ENCODE measurements at regions of chr2 and their contacts with region 1.

Region 1: GRCh38 chr2:85888684-85889626 is at the start of gene ST3GAL5:
- DNase-seq: peak; percentile 90 to 96 (median 94)
- ATAC-seq: peak; percentile 83 to 86
- H3K4me3 Mint-ChIP-seq: peak within 1 kb of the TSS; percentile 95 to 100 (median 99)
- H3K27ac Mint-ChIP-seq: peak within 1 kb of the TSS; percentile 97 to 100 (median 99)
- H3K4me1 Mint-ChIP-seq: peaks cover 46 to 79% (median 77%) of the 10 kb centered on the region in 4 donors
- H3K27me3 Mint-ChIP-seq: no peaks in the 10 kb centered on the region
- polyA plus RNA-seq, gene ST3GAL5: 17.1 to 23.8 (median 17.3) TPM

Region 2: DNA sequence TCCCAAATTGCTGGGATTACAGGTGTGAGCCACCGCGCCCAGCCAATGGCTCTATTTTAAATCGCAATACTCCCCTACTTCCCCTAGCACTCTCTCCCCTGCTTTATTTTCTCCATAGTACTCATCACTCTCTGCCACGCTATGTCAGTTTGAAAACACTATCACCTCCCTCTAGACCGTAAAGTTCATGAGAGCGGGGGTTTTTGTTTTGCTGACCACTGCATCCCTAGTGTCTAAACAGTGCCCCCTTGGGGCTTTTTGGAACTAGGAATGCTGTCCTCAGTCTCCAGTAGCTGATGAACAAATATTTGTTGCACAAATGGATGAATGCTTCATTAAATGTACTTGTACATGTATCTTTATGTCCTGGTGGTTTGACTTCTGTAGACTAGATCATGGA is 91.0 kb before region 1 on chr2:
- POLR2A ChIA-PET with region 1: no interaction called
- DNase-seq: no peak
- ATAC-seq: no peak
- H3K4me3 Mint-ChIP-seq: no peak overlapping the region
- H3K27ac Mint-ChIP-seq: no peak overlapping the region
- H3K4me1 Mint-ChIP-seq: no peaks in the 10 kb centered on the region
- H3K27me3 Mint-ChIP-seq: peaks cover 11 to 26% (median 17%) of the 10 kb centered on the region in 5 donors

Region 3: DNA sequence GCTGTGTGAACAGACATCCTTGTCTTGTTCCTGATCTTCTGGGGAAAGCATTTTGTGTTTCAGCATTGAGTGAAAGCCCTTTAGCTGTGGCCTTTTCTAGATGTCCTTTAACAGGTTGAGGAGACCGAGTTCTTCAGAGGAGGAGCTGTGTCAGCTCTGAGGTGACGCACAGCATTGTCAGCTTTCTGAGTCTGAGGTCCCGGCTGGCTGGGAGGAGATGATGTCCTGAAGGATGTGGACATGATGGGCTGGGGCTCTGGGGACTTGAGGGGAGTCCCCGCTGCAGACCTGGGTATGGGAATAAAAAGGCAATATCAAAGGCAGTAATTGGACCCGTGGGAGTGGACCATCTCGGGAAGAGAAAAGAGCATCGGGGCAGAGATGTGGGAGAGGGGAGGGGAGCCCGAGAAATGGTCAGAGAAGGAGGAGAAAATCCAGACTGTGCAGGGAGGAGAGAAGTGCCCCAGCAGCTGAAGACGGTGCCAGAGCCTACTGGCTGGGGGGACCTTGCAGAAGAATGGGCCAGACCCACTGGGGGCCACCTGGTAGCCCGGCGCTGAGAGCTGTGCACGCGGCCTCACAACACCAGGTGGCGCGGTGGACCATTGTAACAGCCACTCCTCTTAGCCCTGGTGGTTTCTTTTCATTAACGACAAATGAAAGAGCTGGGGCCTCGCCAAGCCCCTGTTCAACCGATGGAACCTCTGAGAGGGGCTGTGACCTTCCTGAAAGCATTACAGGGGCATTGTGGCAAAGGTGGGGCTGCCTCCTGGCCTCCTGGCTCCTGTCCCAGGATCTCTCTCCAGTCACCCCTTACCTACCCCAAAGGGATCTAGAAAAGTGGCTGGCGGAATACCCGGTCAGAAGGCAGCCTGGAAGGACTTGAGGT is 61.7 kb before region 1 on chr2:
- POLR2A ChIA-PET with region 1: interaction called, 43 read pairs
- DNase-seq: peak; percentile 72 to 90 (median 81)
- ATAC-seq: peak; percentile 99
- H3K4me3 Mint-ChIP-seq: peak overlapping the region in 8 of 10 donors; percentile 20 to 59 (median 41)
- H3K27ac Mint-ChIP-seq: peak overlapping the region in 9 of 10 donors; percentile 69 to 90 (median 73)
- H3K4me1 Mint-ChIP-seq: peaks cover 8 to 29% (median 26%) of the 10 kb centered on the region in 4 donors
- H3K27me3 Mint-ChIP-seq: peaks cover 0 to 3% (median 0%) of the 10 kb centered on the region in 5 donors

Region 4: GRCh38 chr2:85852937-85853498 is 35.9 kb before region 1 on chr2:
- POLR2A ChIA-PET with region 1: interaction called, 97 read pairs
- DNase-seq: peak in 9 of 10 donors; percentile 40 to 85 (median 68)
- ATAC-seq: peak; percentile 87 to 90
- H3K4me3 Mint-ChIP-seq: peak overlapping the region; percentile 66 to 90 (median 86)
- H3K27ac Mint-ChIP-seq: peak overlapping the region; percentile 97 to 100 (median 100)
- H3K4me1 Mint-ChIP-seq: peaks cover 33 to 85% (median 81%) of the 10 kb centered on the region in 4 donors
- H3K27me3 Mint-ChIP-seq: no peaks in the 10 kb centered on the region

Region 5: GRCh38 chr2:85905187-85905666 is 16.3 kb after region 1 on chr2:
- POLR2A ChIA-PET with region 1: interaction called, 17 read pairs
- DNase-seq: no peak
- ATAC-seq: no peak
- H3K4me3 Mint-ChIP-seq: no peak overlapping the region
- H3K27ac Mint-ChIP-seq: peak overlapping the region in 1 of 10 donors; percentile 54
- H3K4me1 Mint-ChIP-seq: peaks cover 7 to 20% (median 12%) of the 10 kb centered on the region in 4 donors
- H3K27me3 Mint-ChIP-seq: no peaks in the 10 kb centered on the region

Region 6: GRCh38 chr2:86035883-86036668 is 147.1 kb after region 1 on chr2:
- POLR2A ChIA-PET with region 1: interaction called, 106 read pairs
- DNase-seq: peak; percentile 39 to 88 (median 76)
- ATAC-seq: peak; percentile 43 to 63
- H3K4me3 Mint-ChIP-seq: peak overlapping the region; percentile 74 to 89 (median 84)
- H3K27ac Mint-ChIP-seq: peak overlapping the region; percentile 98 to 100 (median 100)
- H3K4me1 Mint-ChIP-seq: peaks cover 51 to 96% (median 87%) of the 10 kb centered on the region in 4 donors
- H3K27me3 Mint-ChIP-seq: peaks cover 0 to 2% (median 0%) of the 10 kb centered on the region in 5 donors

Region 7: GRCh38 chr2:86079981-86080911 is 191.3 kb after region 1 on chr2:
- POLR2A ChIA-PET with region 1: interaction called, 11 read pairs
- DNase-seq: peak; percentile 68 to 91 (median 80)
- ATAC-seq: peak; percentile 89 to 91
- H3K4me3 Mint-ChIP-seq: peak overlapping the region in 2 of 10 donors; percentile 48 to 55
- H3K27ac Mint-ChIP-seq: peak overlapping the region; percentile 61 to 95 (median 82)
- H3K4me1 Mint-ChIP-seq: peaks cover 5 to 27% (median 22%) of the 10 kb centered on the region in 4 donors
- H3K27me3 Mint-ChIP-seq: no peaks in the 10 kb centered on the region

Region 8: GRCh38 chr2:86097114-86097896 is 208.3 kb after region 1 on chr2:
- POLR2A ChIA-PET with region 1: no interaction called
- DNase-seq: no peak
- ATAC-seq: no peak
- H3K4me3 Mint-ChIP-seq: no peak overlapping the region
- H3K27ac Mint-ChIP-seq: peak overlapping the region in 2 of 10 donors; percentile 22 to 45
- H3K4me1 Mint-ChIP-seq: peaks cover 2 to 27% (median 19%) of the 10 kb centered on the region in 4 donors
- H3K27me3 Mint-ChIP-seq: no peaks in the 10 kb centered on the region